ENCODE measurements at regions of chr9 and their contacts with region 1.

Region 1: GRCh38 chr9:128905964-128906363 is 14.8 kb upstream of the PHYHD1 start:
- DNase-seq: no peak
- H3K27ac ChIP-seq: peak overlapping the region; percentile 99
- CTCF ChIP-seq: no peak

Region 2: GRCh38 chr9:128921881-128922763 is 16.2 kb after region 1 on chr9:
- CTCF ChIA-PET with region 1: interaction called, 5 read pairs
- POLR2A ChIA-PET with region 1: interaction called, 23 read pairs
- DNase-seq: no peak
- H3K27ac ChIP-seq: peak overlapping the region; percentile 99
- CTCF ChIP-seq: no peak

Region 3: GRCh38 chr9:129253803-129254481 is 348.0 kb after region 1 on chr9:
- CTCF ChIA-PET with region 1: no interaction called
- POLR2A ChIA-PET with region 1: no interaction called
- DNase-seq: no peak
- H3K27ac ChIP-seq: no peak overlapping the region
- CTCF ChIP-seq: no peak

Measured in RWPE1 (cell line).